ENCODE measurements at regions of chr12 and their contacts with region 1.

Region 1: DNA sequence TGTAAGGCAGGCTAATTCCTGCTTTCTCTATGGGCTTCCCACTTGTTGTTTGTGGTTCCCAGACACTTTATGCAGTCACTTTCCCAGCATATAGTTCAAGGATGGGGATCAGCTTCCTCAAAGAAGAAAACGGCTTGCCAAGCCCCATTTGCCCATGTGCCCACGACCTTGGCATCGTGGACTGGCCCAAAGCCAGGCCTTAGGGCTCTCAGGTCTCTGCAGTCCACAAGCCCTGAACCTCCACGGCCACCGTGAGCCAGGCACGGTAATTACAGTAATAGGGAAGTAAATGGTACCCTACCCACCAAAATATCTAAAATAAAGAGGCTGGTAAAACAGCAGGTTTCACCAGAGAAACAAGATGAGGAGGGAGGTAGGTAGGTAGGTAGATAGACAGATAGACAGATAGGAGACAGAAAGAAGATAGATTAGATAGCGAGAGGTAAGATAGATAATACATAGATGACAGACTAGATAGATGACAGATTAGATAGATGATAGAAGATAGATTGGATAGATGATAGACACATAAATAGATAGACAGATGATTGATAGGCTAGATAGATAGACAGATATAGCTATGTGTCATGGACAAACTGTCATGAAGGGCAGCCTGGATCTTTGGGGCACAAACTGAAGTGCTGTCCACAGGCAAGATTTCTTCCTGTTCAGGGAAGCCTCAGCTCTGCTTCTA is 163.1 kb downstream of the SLC15A4 start:
- H3K4me3 ChIP-seq: no peak overlapping the region
- H3K27ac ChIP-seq: no peak overlapping the region
- H3K4me1 ChIP-seq: no peaks in the 10 kb centered on the region
- CTCF ChIP-seq: no peak

Region 2: DNA sequence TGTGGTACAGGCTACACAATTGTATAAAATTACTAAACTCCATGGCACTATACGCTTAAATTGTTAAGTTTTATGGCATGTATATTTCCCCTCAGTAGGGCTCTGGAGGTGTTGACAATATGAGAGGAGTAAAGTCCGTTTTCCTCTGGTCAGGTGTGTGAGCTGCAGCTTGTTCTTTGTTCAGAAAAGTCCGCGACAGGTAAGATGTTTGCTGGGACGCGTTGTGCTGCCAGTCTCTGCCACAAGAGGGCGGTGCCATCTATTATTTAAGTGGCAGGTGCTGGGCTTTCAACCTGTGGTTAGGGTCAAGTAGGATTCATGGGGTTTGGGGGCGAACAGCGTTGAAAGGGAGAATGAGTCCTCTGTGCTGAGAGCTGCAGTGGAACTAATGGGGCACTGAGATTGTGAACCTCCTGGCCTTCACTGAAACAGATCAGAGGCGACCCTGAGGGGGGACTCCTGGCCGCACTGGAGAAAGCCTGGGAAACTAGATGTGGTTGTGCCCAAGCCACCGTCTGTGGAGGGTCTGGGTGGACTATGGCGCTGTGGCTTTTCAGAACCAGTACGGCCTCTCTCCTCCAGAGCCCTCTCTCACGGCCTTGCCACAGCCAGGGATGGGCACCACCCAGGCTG is 15.9 kb before region 1 on chr12:
- CTCF ChIA-PET with region 1: interaction called, 10 read pairs
- POLR2A ChIA-PET with region 1: no interaction called
- H3K4me3 ChIP-seq: no peak overlapping the region
- H3K27ac ChIP-seq: no peak overlapping the region
- H3K4me1 ChIP-seq: no peaks in the 10 kb centered on the region
- CTCF ChIP-seq: 0 out of 2 replicates have a peak, but pooled peaks have one; percentile 15

Region 3: GRCh38 chr12:128671528-128672042 is 10.9 kb after region 1 on chr12:
- CTCF ChIA-PET with region 1: no interaction called
- POLR2A ChIA-PET with region 1: no interaction called
- H3K4me3 ChIP-seq: no peak overlapping the region
- H3K27ac ChIP-seq: no peak overlapping the region
- H3K4me1 ChIP-seq: no peaks in the 10 kb centered on the region
- CTCF ChIP-seq: no peak

Measured in HEK293 (cell line).